MCF 10A (cell line): ENCODE measurements at regions of chr18 and their contacts with region 1.

Region 1: DNA sequence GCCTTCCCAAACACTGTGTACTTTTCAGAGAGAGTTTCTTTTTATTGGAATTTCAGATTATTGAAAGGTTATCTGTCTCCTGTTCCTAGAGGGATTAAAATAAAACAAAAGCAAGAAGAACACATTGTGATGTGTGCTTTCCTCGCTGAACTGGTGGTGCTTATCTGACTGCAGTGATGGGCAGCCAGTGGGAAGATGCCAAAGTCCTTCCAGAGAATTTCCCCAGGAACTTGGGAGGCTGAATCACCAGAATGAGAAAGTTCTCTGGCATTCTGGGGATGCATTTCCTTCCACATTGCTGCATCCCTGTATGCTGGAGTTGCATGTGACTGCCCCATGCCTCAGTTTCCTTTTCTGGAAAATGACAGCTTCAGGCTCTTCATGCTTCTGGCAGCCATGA is 53.9 kb upstream of the SEC11C start:
- DNase-seq: no peak
- H3K4me3 Mint-ChIP-seq: no peak overlapping the region
- H3K27ac Mint-ChIP-seq: no peak overlapping the region
- H3K4me1 Mint-ChIP-seq: peaks cover 5% of the 10 kb centered on the region
- H3K27me3 Mint-ChIP-seq: peaks cover 70% of the 10 kb centered on the region
- CTCF ChIP-seq: no peak

Region 2: GRCh38 chr18:59056706-59057492 is 28.9 kb before region 1 on chr18:
- CTCF ChIA-PET with region 1: no interaction called
- POLR2A ChIA-PET with region 1: no interaction called
- intact Hi-C with region 1: no loop called
- DNase-seq: peak; percentile 71
- H3K4me3 Mint-ChIP-seq: no peak overlapping the region
- H3K27ac Mint-ChIP-seq: no peak overlapping the region
- H3K4me1 Mint-ChIP-seq: peaks cover 11% of the 10 kb centered on the region
- H3K27me3 Mint-ChIP-seq: no peaks in the 10 kb centered on the region
- CTCF ChIP-seq: peak; percentile 58

Region 3: GRCh38 chr18:59096098-59096789 is 10.4 kb after region 1 on chr18:
- CTCF ChIA-PET with region 1: interaction called, 11 read pairs
- POLR2A ChIA-PET with region 1: interaction called, 3 read pairs
- intact Hi-C with region 1: no loop called
- DNase-seq: no peak
- H3K4me3 Mint-ChIP-seq: no peak overlapping the region
- H3K27ac Mint-ChIP-seq: no peak overlapping the region
- H3K4me1 Mint-ChIP-seq: no peaks in the 10 kb centered on the region
- H3K27me3 Mint-ChIP-seq: peaks cover 70% of the 10 kb centered on the region
- CTCF ChIP-seq: no peak

Region 4: GRCh38 chr18:59308248-59308937 is 222.6 kb after region 1 on chr18:
- CTCF ChIA-PET with region 1: interaction called, 3 read pairs
- POLR2A ChIA-PET with region 1: no interaction called
- intact Hi-C with region 1: loop called (anchors 10 kb)
- DNase-seq: peak; percentile 72
- H3K4me3 Mint-ChIP-seq: peak overlapping the region; percentile 28
- H3K27ac Mint-ChIP-seq: no peak overlapping the region
- H3K4me1 Mint-ChIP-seq: no peaks in the 10 kb centered on the region
- H3K27me3 Mint-ChIP-seq: peaks cover 30% of the 10 kb centered on the region
- CTCF ChIP-seq: peak; percentile 77

Region 5: GRCh38 chr18:59328683-59329082 is 242.9 kb after region 1 on chr18:
- CTCF ChIA-PET with region 1: no interaction called
- POLR2A ChIA-PET with region 1: no interaction called
- intact Hi-C with region 1: no loop called
- DNase-seq: no peak
- H3K4me3 Mint-ChIP-seq: no peak overlapping the region
- H3K27ac Mint-ChIP-seq: no peak overlapping the region
- H3K4me1 Mint-ChIP-seq: no peaks in the 10 kb centered on the region
- H3K27me3 Mint-ChIP-seq: no peaks in the 10 kb centered on the region
- CTCF ChIP-seq: no peak